ENCODE measurements at regions of chr3 and their contacts with region 1.

Region 1: DNA sequence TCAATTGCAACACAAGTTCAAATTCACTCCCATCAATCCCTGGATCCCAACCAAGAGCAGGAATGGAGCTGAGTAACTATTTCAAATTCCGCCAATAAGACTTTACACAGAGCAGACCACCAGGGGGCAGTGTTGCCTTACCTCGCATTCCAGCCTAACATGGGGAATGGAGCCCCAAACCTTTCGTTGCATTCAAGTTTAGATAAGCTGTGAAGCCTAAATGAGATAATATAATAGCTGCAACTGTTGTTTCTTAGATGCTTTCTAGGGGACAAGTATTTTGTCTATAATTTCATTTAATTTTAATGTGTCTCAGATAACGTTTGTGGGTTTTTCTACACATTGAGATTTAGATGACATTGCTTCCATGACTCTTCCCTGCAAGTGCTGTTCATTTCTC is 186.7 kb downstream of the NSUN3 start:
- DNase-seq: no peak
- H3K4me3 ChIP-seq: no peak overlapping the region
- H3K27me3 ChIP-seq: no peaks in the 10 kb centered on the region
- CTCF ChIP-seq: peak; percentile 80

Region 2: DNA sequence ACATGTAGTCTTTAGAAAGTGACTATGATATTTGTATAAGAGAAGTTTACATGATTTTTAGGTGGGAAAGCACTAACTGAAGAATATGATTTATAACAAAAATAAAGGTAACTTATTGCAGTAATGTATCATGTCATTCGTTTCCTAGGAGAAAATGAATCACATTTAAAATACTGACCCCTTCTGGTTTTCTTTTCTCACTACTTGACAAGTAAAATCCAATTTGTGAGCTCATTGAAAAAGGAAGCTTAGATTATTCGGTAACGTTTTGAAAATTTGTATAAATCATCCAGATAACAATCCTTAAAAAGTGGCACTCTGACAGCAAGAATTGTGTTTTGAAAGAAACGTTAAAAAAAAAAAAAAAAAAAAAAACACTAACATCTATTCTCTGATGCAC is 147.7 kb before region 1 on chr3:
- CTCF ChIA-PET with region 1: no interaction called
- POLR2A ChIA-PET with region 1: no interaction called
- DNase-seq: no peak
- H3K4me3 ChIP-seq: no peak overlapping the region
- H3K27me3 ChIP-seq: no peaks in the 10 kb centered on the region
- CTCF ChIP-seq: 0 out of 2 replicates have a peak, but pooled peaks have one; percentile 11

Region 3: DNA sequence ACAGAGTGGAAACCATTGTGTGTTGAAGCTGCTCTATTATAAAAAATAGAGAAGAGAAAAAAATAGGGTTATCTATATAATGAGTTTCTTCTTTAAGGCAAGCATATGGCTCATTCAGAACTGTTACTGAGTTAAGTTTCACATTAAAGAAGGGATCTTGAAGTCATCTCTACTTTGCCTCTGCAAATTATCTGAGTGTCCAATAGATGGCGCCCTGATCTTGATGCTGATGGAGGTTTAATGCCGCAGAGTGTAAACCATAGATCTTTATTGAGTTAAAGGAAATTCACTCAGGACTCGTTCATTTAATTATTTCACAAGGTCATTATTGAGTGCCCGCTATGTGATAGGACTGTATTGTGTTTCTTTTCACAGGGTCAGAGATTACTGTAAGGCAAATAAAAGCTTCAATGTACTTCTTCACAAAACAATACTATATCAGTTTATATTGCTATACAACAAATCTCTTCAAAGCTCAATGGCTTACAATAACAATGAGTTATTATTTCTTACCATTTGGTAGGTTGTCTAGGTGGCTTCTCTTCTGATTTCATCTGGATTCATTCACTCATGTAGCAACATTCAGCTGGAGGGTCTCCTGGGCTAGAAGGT is 15.3 kb before region 1 on chr3:
- CTCF ChIA-PET with region 1: interaction called, 15 read pairs
- POLR2A ChIA-PET with region 1: no interaction called
- DNase-seq: no peak
- H3K4me3 ChIP-seq: no peak overlapping the region
- H3K27me3 ChIP-seq: no peaks in the 10 kb centered on the region
- CTCF ChIP-seq: peak; percentile 68

Region 4: DNA sequence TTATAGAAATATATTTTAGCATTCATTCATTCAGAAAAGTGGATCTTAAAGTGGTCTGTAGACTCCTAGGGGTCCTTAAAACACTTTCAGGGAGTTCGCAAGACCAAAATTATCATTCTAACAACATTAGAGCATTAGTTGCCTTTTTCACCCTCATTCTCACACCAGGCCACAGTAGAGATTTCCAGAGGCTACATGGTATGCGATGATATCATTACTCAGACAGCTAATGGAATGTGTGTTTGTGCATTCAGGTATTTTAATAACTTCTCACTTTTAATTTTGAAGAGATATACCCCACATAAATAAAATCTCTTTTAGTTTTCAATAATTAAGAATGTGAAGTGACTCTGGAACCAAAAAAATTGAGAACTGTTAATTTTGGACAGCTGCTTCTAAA is 20.2 kb after region 1 on chr3:
- CTCF ChIA-PET with region 1: interaction called, 11 read pairs
- POLR2A ChIA-PET with region 1: no interaction called
- DNase-seq: no peak
- H3K4me3 ChIP-seq: no peak overlapping the region
- H3K27me3 ChIP-seq: no peaks in the 10 kb centered on the region
- CTCF ChIP-seq: no peak